HEK293 (cell line): ENCODE measurements at regions of chr1 and their contacts with region 1.

Region 1: GRCh38 chr1:40143891-40144575 is 17.2 kb upstream of the RLF start:
- H3K4me3 ChIP-seq: no peak overlapping the region
- H3K27ac ChIP-seq: no peak overlapping the region
- H3K4me1 ChIP-seq: no peaks in the 10 kb centered on the region
- CTCF ChIP-seq: no peak; the same call in 1 of the 2 replicates

Region 2: DNA sequence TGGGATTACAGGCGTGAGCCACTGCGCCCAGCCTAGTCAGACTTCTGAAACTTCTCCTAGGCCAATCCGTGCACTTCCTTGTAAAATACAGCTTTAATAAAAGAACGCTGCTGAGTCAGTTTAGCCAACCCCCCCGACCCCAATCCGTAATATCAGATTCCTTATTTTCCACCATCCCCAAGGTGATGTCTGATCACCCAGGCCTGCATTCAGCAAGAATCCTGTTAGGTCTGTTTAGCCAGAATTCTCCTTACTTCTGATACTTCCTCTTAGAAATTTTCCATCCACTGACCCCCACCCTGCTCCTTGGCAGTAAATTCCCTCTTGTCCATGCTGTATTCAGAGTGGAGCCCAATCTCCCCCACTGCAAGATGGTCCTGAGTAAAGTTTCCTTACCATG is 555.9 kb before region 1 on chr1:
- CTCF ChIA-PET with region 1: no interaction called
- POLR2A ChIA-PET with region 1: no interaction called
- H3K4me3 ChIP-seq: no peak overlapping the region
- H3K27ac ChIP-seq: no peak overlapping the region
- H3K4me1 ChIP-seq: no peaks in the 10 kb centered on the region
- CTCF ChIP-seq: no peak

Region 3: DNA sequence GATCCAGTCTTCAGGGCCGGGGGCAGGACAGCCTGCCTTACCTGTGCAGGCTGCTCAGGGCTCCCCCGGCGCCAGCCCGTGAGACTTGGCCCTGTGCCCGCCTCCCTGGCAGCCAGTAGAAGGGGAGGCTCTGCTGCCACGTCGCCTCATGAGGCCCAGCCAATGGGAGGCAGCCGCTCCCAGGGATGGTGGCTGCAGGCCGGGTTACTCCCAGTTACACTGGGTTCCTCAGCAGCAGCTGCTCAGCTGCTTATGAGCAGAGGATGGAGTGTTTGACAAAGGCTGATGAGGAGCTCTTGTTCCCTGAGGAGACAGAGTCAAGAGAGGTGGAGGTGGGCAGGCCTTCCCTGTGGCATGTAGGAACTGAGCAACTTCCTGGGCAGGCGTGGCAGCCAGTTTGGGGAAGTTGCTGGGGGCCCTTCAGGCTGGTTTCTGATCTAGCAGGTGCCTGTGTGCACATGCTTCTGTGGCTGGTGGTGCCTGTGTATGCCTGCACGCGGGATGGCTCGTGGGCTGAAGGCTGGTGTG is 183.5 kb before region 1 on chr1:
- CTCF ChIA-PET with region 1: no interaction called
- POLR2A ChIA-PET with region 1: no interaction called
- H3K4me3 ChIP-seq: no peak overlapping the region
- H3K27ac ChIP-seq: no peak overlapping the region
- H3K4me1 ChIP-seq: no peaks in the 10 kb centered on the region
- CTCF ChIP-seq: no peak

Region 4: GRCh38 chr1:40122855-40123254 is 21.2 kb before region 1 on chr1:
- CTCF ChIA-PET with region 1: interaction called, 11 read pairs
- POLR2A ChIA-PET with region 1: interaction called, 3 read pairs
- H3K4me3 ChIP-seq: no peak overlapping the region
- H3K27ac ChIP-seq: no peak overlapping the region
- H3K4me1 ChIP-seq: no peaks in the 10 kb centered on the region; the same call in 1 of the 2 replicates
- CTCF ChIP-seq: no peak

Region 5: DNA sequence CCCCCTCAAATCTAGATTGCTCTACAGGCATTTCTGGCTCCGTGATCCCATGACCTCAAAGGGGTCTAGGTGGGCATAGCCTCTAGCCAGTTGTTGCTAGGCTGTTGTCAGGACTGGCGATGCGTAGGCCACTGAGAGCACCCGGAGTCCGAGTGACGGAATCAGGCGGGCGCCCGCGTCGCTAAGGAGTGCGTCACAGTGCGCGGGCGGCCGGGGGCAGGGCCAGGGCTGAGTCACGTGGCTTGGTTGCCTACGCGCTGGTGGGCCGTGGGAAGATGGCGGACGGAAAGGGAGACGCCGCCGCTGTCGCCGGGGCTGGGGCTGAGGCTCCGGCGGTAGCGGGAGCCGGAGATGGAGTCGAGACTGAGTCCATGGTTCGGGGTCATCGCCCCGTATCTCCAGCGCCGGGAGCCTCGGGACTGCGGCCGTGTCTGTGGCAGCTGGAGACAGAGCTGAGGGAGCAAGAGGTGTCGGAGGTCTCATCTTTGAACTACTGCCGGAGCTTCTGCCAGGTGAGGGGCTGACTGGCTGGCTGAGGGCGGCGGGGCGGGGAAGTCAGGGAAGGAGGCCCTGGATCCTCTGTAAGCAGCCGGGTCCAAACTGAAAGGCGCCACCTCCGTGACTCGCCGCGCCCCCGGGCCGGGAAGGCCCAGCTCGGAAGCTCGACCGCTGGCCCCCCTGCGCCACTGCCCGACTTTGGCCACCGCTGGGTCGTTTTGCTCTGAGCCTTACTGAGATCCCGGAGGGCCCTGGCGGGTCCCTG is 17.3 kb after region 1 on chr1 and contains the start of gene RLF:
- CTCF ChIA-PET with region 1: interaction called, 86 read pairs
- POLR2A ChIA-PET with region 1: interaction called, 3 read pairs
- H3K4me3 ChIP-seq: peak within 1 kb of the TSS; percentile 82
- H3K27ac ChIP-seq: peak within 1 kb of the TSS; percentile 55; the same call in 1 of the 2 replicates
- H3K4me1 ChIP-seq: peaks cover 3% of the 10 kb centered on the region
- CTCF ChIP-seq: peak; percentile 29; the same call in 1 of the 2 replicates

Region 6: DNA sequence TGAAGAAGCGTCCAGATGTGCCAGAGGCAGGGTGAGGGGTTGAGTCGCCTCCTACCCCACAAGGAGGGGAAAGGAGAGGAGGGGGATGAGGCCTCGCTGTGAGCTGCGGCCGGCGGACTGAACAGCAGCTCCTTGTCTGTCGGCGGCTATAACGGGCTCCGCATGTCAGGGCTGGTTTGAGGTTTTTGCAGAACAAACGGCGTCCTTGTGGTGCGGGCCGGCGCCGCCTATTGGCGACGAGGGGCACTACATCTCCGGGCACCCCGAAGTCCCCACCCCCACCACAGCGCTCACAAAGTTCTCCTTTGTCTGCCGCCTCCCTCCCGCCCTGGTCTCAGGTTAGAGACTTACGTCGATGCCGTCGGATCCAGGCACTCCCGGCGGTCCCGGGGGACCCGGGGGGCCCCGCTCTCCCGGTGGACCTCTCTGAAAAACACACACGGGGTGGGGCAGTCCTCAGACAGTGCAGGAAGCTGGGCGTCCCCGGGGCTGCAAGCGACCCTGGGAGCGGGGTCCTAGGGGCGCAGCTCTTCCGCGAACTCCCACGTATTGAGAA is 171.3 kb after region 1 on chr1:
- CTCF ChIA-PET with region 1: interaction called, 20 read pairs
- POLR2A ChIA-PET with region 1: no interaction called
- H3K4me3 ChIP-seq: no peak overlapping the region
- H3K27ac ChIP-seq: no peak overlapping the region
- H3K4me1 ChIP-seq: no peaks in the 10 kb centered on the region; the same call in 1 of the 2 replicates
- CTCF ChIP-seq: peak; percentile 58; the same call in 1 of the 2 replicates

Region 7: GRCh38 chr1:40404670-40405462 is 260.8 kb after region 1 on chr1:
- CTCF ChIA-PET with region 1: interaction called, 40 read pairs
- POLR2A ChIA-PET with region 1: no interaction called
- H3K4me3 ChIP-seq: no peak overlapping the region
- H3K27ac ChIP-seq: no peak overlapping the region
- H3K4me1 ChIP-seq: peaks cover 6% of the 10 kb centered on the region; the same call in 1 of the 2 replicates
- CTCF ChIP-seq: peak; percentile 63; the same call in 1 of the 2 replicates